Activated CD4-positive, alpha-beta T cell treated with anti-CD3 and anti-CD28 coated beads, Interleukin-2, amount 10 ng/mL, durations not matched to agents 24 days and 14 days (primary cell): ENCODE measurements at regions of chr6 and their contacts with region 1.

Region 1: GRCh38 chr6:24774696-24775519 is at the start of gene GMNN:
- DNase-seq: peak; percentile 100
- H3K4me3 Mint-ChIP-seq: peak within 1 kb of the TSS; percentile 99
- H3K27ac Mint-ChIP-seq: peak within 1 kb of the TSS; percentile 99
- H3K4me1 Mint-ChIP-seq: peaks cover 32% of the 10 kb centered on the region
- H3K27me3 Mint-ChIP-seq: no peaks in the 10 kb centered on the region
- total RNA-seq, gene GMNN: 71.0 and 76.8 TPM in 2 replicates

Region 2: GRCh38 chr6:24743265-24743943 is 31.5 kb before region 1 on chr6:
- intact Hi-C with region 1: loop called (anchors 1 kb)
- DNase-seq: peak; percentile 62
- H3K4me3 Mint-ChIP-seq: peak overlapping the region; percentile 40
- H3K27ac Mint-ChIP-seq: peak overlapping the region; percentile 81
- H3K4me1 Mint-ChIP-seq: peaks cover 15% of the 10 kb centered on the region
- H3K27me3 Mint-ChIP-seq: no peaks in the 10 kb centered on the region

Region 3: GRCh38 chr6:24788048-24788665 is 13.2 kb after region 1 on chr6:
- intact Hi-C with region 1: loop called (anchors 1 kb)
- DNase-seq: no peak
- H3K4me3 Mint-ChIP-seq: no peak overlapping the region
- H3K27ac Mint-ChIP-seq: peak overlapping the region; percentile 88
- H3K4me1 Mint-ChIP-seq: peaks cover 12% of the 10 kb centered on the region
- H3K27me3 Mint-ChIP-seq: no peaks in the 10 kb centered on the region

Region 4: DNA sequence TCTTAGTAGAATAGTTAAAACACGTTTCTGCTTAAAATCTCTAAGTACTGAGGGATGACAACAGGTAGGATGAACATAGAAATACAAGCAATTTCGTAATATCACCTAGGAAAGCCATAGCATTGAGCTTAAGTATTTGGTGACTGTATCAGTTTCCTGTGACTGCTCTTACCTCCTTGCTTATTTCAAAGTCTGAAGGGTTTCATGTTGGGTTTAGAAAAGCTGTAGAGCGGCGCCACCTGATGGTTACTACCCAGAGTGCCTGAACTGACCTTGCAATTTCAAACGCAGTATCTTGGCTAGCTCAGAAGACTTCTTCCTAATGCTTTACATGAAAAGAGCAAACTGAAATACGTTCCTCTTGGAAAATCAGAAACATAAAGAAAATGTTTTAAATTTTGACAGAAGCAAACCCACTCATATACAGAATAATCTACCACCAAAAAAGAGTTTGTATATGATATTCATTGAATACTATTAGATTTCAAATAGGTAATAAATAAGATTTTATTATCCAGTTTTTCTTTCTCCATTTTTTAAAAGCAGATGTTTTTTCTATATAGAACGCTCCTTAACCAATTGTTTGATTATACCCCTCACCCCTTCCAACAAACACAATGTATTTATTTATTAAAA is 243.1 kb after region 1 on chr6:
- intact Hi-C with region 1: loop called (anchors 5 kb)
- DNase-seq: peak; percentile 93
- H3K4me3 Mint-ChIP-seq: peak overlapping the region; percentile 31
- H3K27ac Mint-ChIP-seq: peak overlapping the region; percentile 84
- H3K4me1 Mint-ChIP-seq: peaks cover 33% of the 10 kb centered on the region
- H3K27me3 Mint-ChIP-seq: no peaks in the 10 kb centered on the region

Region 5: DNA sequence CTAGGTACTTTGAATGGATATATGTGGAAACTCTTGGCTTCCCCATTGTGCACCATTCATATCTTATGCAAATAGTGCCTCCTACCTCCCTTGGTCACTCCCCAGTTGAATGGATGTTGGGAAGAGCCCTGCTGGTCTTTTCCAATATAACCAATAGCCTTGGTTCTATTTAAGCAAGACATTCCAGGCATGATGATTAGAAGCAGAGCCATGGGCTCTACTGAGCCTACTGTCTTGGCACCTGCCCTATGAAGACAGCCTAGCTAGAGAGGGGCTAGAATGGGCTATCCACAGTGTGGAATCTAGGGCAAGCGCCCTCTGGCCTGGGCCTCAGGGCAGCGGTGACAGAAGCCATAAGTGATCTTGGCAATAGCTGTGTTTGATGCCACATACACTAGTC is 1041.3 kb after region 1 on chr6:
- intact Hi-C with region 1: no loop called
- DNase-seq: no peak
- H3K4me3 Mint-ChIP-seq: no peak overlapping the region
- H3K27ac Mint-ChIP-seq: no peak overlapping the region
- H3K4me1 Mint-ChIP-seq: peaks cover 1% of the 10 kb centered on the region
- H3K27me3 Mint-ChIP-seq: peaks cover 21% of the 10 kb centered on the region